CD8-positive, alpha-beta memory T cell (primary cell): ENCODE measurements at regions of chr2 and their contacts with region 1.

Region 1: GRCh38 chr2:201860636-201861066 is 54.3 kb downstream of the CDK15 start:
- DNase-seq: peak in 3 of 5 donors; percentile 18 to 47 (median 40)
- H3K4me3 ChIP-seq: no peak overlapping the region
- H3K4me3 Mint-ChIP-seq: peak overlapping the region in 1 of 7 donors; percentile 52
- H3K27ac ChIP-seq: no peak overlapping the region
- H3K27ac Mint-ChIP-seq: no peak overlapping the region
- H3K4me1 ChIP-seq: peaks cover 17% of the 10 kb centered on the region
- H3K4me1 Mint-ChIP-seq: peaks cover 16 to 20% (median 16%) of the 10 kb centered on the region in 3 donors
- H3K27me3 ChIP-seq: peaks cover 7% of the 10 kb centered on the region
- H3K27me3 Mint-ChIP-seq: peaks cover 29 to 67% of the 10 kb centered on the region in 2 donors

Region 2: DNA sequence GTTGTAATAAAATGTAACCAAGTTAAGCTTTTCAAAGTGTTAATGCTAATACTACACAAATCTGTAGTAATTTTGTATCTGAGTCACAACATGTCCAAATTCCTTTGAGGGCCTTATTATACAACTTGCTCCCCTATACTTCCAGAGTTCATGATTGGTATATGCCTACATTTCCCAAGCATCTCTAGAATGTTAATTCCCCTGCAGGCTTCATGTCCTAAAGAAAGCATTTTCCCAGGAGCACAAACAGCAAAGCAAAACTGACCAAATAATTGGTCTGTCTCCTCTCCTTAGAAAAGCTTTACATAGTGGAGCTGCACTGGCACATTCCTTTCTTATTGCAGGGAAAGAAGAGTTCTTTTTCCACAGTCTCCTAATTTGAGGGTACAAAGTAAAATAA is 83.6 kb before region 1 on chr2:
- CTCF ChIA-PET with region 1: no interaction called
- POLR2A ChIA-PET with region 1: no interaction called
- DNase-seq: no peak
- H3K4me3 ChIP-seq: no peak overlapping the region
- H3K4me3 Mint-ChIP-seq: peak overlapping the region in 1 of 7 donors; percentile 21
- H3K27ac ChIP-seq: no peak overlapping the region
- H3K27ac Mint-ChIP-seq: no peak overlapping the region
- H3K4me1 ChIP-seq: peaks cover 13% of the 10 kb centered on the region
- H3K4me1 Mint-ChIP-seq: peaks cover 19 to 33% (median 32%) of the 10 kb centered on the region in 3 donors
- H3K27me3 ChIP-seq: no peaks in the 10 kb centered on the region
- H3K27me3 Mint-ChIP-seq: peaks cover 0 to 5% of the 10 kb centered on the region in 2 donors

Region 3: GRCh38 chr2:202158796-202159195 is 298.1 kb after region 1 on chr2:
- CTCF ChIA-PET with region 1: no interaction called
- POLR2A ChIA-PET with region 1: no interaction called
- DNase-seq: no peak
- H3K4me3 ChIP-seq: no peak overlapping the region
- H3K4me3 Mint-ChIP-seq: no peak overlapping the region
- H3K27ac ChIP-seq: no peak overlapping the region
- H3K27ac Mint-ChIP-seq: no peak overlapping the region
- H3K4me1 ChIP-seq: no peaks in the 10 kb centered on the region
- H3K4me1 Mint-ChIP-seq: no peaks in the 10 kb centered on the region
- H3K27me3 ChIP-seq: no peaks in the 10 kb centered on the region
- H3K27me3 Mint-ChIP-seq: peaks cover 8 to 34% of the 10 kb centered on the region in 2 donors

Region 4: DNA sequence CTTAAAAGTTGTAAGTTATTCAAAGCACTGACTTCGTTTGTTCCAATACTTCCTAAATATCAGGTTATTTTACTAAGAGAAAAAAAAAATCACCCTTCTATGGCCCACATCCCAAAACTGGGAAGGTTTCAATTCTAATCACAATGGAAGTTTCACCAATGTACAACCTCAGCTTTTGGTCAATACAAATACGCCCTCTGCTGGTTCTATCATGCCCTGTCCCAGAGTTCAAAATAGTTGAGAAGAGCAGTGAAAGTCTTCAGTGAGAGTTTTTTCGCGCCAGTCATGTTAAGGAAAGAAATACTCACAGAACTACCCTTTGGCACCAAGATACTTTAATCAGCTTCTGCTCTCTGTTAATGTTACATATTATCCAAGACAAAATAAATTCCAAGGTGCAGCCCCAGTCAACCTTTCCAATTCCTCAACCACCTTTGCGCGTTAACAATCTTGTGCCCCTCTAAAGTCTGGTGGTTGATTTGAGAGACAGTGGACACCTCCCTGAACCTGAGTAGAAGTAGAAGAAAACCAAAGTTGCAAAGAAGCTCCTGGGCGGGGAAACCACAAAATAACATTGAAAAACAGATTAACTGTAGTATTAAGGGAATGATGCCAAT is 317.8 kb after region 1 on chr2:
- CTCF ChIA-PET with region 1: interaction called, 45 read pairs
- POLR2A ChIA-PET with region 1: no interaction called
- DNase-seq: peak; percentile 3 to 59 (median 39)
- H3K4me3 ChIP-seq: no peak overlapping the region
- H3K4me3 Mint-ChIP-seq: no peak overlapping the region
- H3K27ac ChIP-seq: no peak overlapping the region
- H3K27ac Mint-ChIP-seq: no peak overlapping the region
- H3K4me1 ChIP-seq: no peaks in the 10 kb centered on the region
- H3K4me1 Mint-ChIP-seq: no peaks in the 10 kb centered on the region
- H3K27me3 ChIP-seq: no peaks in the 10 kb centered on the region
- H3K27me3 Mint-ChIP-seq: peaks cover 4 to 13% of the 10 kb centered on the region in 2 donors